ENCODE measurements at regions of chr11 and their contacts with region 1.

Region 1: GRCh38 chr11:125404776-125405435 is 91.2 kb downstream of the FEZ1 start:
- DNase-seq: peak; percentile 88
- ATAC-seq: peak; percentile 92

Region 2: DNA sequence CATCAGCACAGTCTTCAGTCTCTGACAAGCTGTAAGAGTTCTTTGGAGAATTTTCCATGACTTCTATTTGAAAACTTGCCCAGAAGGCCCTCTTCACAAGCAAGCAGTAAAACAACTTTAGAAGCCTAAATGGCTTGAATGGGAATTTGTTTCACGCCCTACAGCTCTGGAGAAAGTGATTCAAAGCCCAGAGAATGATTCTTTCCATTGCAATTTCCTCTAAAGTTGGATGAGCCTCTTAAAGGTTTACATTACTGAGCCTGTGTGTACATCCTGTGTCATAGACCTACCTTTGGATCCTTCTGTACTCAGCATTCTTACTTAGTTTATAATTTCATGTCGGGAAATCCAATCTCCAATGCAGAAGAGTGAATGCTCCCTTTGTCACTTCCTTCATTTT is 999.3 kb before region 1 on chr11:
- intact Hi-C with region 1: no loop called
- DNase-seq: no peak
- ATAC-seq: no peak

Region 3: DNA sequence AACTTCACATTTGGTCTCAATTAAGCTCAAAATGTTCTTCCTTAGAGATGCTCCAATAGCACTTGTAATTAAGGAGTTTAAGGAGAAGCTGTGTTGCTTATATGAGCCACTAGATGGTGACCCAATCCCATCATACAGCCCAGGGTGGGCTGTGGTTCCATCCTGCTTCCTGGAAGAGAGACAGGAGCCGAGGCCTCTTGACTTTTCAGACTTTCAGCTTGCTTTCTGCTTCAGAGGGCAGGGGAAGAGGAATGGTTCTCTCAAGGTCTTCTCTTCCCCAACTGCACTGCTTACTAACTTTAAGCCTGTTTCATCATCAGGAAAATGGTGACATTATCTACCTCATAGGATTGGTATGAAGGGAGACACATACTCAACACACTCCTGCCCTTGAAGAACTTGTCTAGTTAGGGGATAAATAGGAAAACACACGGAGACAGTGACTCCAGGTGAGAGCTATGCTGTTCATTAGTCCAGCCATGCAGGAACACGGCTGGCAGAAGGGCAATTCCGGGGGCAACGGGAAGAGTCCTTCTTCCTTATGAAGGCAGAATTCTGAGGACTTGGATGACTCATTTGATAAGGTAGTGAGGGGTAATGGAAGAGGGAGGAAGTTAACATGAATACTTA is 313.5 kb before region 1 on chr11:
- intact Hi-C with region 1: loop called (anchors 5 kb)
- DNase-seq: no peak
- ATAC-seq: peak; percentile 94

Region 4: GRCh38 chr11:125154378-125155099 is 250.4 kb before region 1 on chr11:
- intact Hi-C with region 1: loop called (anchors 10 kb)
- DNase-seq: no peak
- ATAC-seq: no peak

Region 5: DNA sequence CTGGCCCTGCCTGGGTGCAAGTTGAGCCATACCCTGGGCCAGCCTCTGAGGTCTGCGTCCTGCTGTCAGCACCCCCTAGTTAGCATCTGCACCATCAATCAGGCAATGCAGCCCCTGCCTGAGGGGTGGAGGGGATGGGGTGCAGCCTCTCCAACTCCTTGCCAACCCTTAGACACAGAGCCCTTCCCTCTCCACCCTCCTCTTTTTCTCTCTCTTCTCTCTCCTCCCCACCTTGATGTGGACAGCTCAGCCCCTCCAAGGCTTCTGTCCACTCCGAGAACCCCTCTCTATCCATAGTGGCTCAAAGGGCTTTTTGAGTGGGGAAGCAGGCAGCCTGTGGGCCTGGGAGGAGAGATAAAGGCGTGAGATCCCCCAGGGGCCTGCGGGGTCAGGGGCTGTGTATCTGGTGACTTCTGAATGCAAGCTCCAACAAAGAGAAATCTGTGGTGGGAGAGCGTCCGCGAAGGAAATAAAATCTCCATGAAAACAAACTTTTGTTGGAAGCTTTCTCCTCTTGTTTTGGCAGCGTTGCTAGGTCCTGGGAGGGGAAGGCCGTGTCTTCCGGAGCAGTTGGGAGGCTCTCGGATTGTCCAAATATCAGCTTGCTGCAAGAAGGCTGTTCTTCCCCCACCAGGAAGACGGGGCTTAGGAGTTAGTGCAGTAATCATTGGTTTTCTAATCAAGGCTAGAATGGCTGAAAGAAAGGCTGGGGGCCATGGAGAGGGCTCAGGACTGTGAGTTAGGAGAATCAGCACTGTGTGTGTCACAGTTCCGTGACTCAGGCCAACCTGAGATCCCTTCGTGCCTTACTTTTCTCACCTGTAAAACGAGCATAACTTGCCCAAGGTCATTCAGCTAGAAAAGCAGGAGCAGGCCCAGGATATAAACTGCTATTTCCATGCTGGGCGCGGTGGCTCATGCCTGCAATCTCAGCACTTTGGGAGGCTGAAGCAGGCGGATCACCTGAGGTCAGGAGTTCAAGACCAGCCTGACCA is 190.0 kb before region 1 on chr11:
- intact Hi-C with region 1: loop called (anchors 5 kb)
- DNase-seq: peak; percentile 76
- ATAC-seq: peak; percentile 87

Region 6: GRCh38 chr11:125514336-125515101 is 109.6 kb after region 1 on chr11:
- intact Hi-C with region 1: no loop called
- DNase-seq: no peak
- ATAC-seq: peak; percentile 47